Endothelial cell of umbilical vein (primary cell): ENCODE measurements at regions of chr12 and their contacts with region 1.

Region 1: GRCh38 chr12:65935906-65936901 is 111.9 kb downstream of the HMGA2 start:
- DNase-seq: peak; percentile 97
- H3K4me3 ChIP-seq: peak overlapping the region in 1 of 3 experiments; percentile 22
- H3K27ac ChIP-seq: peak overlapping the region; percentile 96
- H3K4me1 ChIP-seq: peaks cover 80% of the 10 kb centered on the region
- H3K27me3 ChIP-seq: no peaks in the 10 kb centered on the region
- CTCF ChIP-seq: no peak
- POLR2A ChIP-seq: peak; percentile 52

Region 2: GRCh38 chr12:65886996-65887395 is 49.2 kb before region 1 on chr12:
- CTCF ChIA-PET with region 1: interaction called, 14 read pairs
- POLR2A ChIA-PET with region 1: no interaction called
- dilution Hi-C with region 1: no loop called
- intact Hi-C with region 1: loop called (anchors 1 kb)
- DNase-seq: peak; percentile 51
- H3K4me3 ChIP-seq: no peak overlapping the region
- H3K27ac ChIP-seq: peak overlapping the region; percentile 87
- H3K4me1 ChIP-seq: peaks cover 66% of the 10 kb centered on the region
- H3K27me3 ChIP-seq: no peaks in the 10 kb centered on the region
- CTCF ChIP-seq: no peak
- POLR2A ChIP-seq: no peak

Region 3: GRCh38 chr12:65891987-65892481 is 44.2 kb before region 1 on chr12:
- CTCF ChIA-PET with region 1: interaction called, 14 read pairs
- POLR2A ChIA-PET with region 1: interaction called, 3 read pairs
- dilution Hi-C with region 1: no loop called
- intact Hi-C with region 1: loop called (anchors 1 kb)
- DNase-seq: peak; percentile 91
- H3K4me3 ChIP-seq: peak overlapping the region in 1 of 3 experiments; percentile 17
- H3K27ac ChIP-seq: peak overlapping the region; percentile 96
- H3K4me1 ChIP-seq: peaks cover 45% of the 10 kb centered on the region
- H3K27me3 ChIP-seq: no peaks in the 10 kb centered on the region
- CTCF ChIP-seq: no peak
- POLR2A ChIP-seq: peak; percentile 55

Region 4: DNA sequence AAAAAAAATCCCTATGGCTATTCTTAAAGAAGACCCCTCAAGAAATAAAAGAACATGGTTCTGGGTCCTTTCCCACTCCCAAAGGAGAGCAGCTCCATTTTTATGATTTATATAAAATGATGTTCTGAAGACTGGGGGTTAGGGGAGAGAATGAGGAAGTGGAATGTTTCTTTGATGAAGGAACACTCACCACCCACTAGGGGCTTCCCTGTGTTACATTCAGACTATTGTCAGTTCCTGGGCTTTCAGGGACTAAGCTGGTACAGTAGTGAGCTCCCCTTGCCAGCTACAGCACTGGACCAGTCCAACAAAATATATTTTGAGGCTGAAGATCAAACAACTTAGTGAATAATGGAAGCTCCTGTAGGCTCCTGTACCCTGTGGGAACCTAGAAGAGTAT is 13.0 kb before region 1 on chr12:
- CTCF ChIA-PET with region 1: interaction called, 17 read pairs
- POLR2A ChIA-PET with region 1: interaction called, 5 read pairs
- dilution Hi-C with region 1: no loop called
- intact Hi-C with region 1: no loop called
- DNase-seq: no peak
- H3K4me3 ChIP-seq: no peak overlapping the region
- H3K27ac ChIP-seq: no peak overlapping the region
- H3K4me1 ChIP-seq: peaks cover 31% of the 10 kb centered on the region
- H3K27me3 ChIP-seq: no peaks in the 10 kb centered on the region
- CTCF ChIP-seq: no peak
- POLR2A ChIP-seq: no peak

Region 5: GRCh38 chr12:65962921-65963861 is 27.0 kb after region 1 on chr12:
- CTCF ChIA-PET with region 1: interaction called, 12 read pairs
- POLR2A ChIA-PET with region 1: no interaction called
- dilution Hi-C with region 1: no loop called
- intact Hi-C with region 1: loop called (anchors 1 kb)
- DNase-seq: peak; percentile 85
- H3K4me3 ChIP-seq: no peak overlapping the region
- H3K27ac ChIP-seq: peak overlapping the region; percentile 70
- H3K4me1 ChIP-seq: peaks cover 36% of the 10 kb centered on the region
- H3K27me3 ChIP-seq: no peaks in the 10 kb centered on the region
- CTCF ChIP-seq: peak; percentile 7 to 11
- POLR2A ChIP-seq: no peak

Region 6: DNA sequence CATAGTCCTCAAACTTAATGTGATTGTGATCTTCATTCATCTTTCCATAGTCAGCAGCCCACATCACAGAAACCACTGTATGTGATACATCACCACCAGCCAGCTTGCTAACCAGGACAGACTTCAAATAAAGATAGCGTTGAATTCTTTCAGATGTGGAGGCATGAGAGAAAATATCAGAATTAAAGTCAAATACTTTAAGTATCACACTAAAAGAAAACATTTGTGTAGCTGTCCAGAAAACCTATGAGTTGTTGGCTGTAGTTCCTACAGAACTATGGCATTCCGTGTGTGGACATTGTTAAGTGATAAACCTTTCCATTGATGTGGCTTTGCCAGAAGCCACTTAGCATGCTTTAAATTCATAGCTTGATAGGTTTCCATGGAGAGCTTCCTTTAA is 89.3 kb after region 1 on chr12:
- CTCF ChIA-PET with region 1: no interaction called
- POLR2A ChIA-PET with region 1: no interaction called
- dilution Hi-C with region 1: no loop called
- intact Hi-C with region 1: no loop called
- DNase-seq: no peak
- H3K4me3 ChIP-seq: no peak overlapping the region
- H3K27ac ChIP-seq: no peak overlapping the region
- H3K4me1 ChIP-seq: no peaks in the 10 kb centered on the region
- H3K27me3 ChIP-seq: peaks cover 2 to 7% of the 10 kb centered on the region in 2 experiments
- CTCF ChIP-seq: no peak
- POLR2A ChIP-seq: no peak

Region 7: DNA sequence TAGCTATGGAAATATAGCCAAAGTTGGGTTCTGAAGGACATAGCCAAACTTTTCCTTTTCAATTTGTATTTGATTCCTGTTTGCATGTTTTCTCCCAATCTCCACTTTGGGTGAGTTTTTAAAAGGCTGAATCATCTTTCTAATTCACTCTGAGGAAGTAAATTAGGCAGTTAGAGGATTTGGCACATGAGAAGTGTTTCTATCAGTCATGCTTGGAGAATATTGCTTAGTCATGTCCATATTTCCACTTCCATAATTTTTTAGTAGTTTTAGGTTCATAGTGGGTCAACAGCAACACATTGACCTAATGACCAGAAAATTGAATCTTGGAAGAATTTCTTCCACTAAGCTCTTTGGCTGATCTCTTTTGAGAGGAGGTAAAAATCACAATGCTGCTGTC is 274.6 kb after region 1 on chr12:
- CTCF ChIA-PET with region 1: no interaction called
- POLR2A ChIA-PET with region 1: no interaction called
- dilution Hi-C with region 1: no loop called
- intact Hi-C with region 1: no loop called
- DNase-seq: no peak
- H3K4me3 ChIP-seq: no peak overlapping the region
- H3K27ac ChIP-seq: no peak overlapping the region
- H3K4me1 ChIP-seq: no peaks in the 10 kb centered on the region
- H3K27me3 ChIP-seq: no peaks in the 10 kb centered on the region
- CTCF ChIP-seq: no peak
- POLR2A ChIP-seq: no peak